Activated CD8-positive, alpha-beta T cell treated with anti-CD3 and anti-CD28 coated beads for 36 hours (primary cell): ENCODE measurements at regions of chr14 and their contacts with region 1.

Region 1: DNA sequence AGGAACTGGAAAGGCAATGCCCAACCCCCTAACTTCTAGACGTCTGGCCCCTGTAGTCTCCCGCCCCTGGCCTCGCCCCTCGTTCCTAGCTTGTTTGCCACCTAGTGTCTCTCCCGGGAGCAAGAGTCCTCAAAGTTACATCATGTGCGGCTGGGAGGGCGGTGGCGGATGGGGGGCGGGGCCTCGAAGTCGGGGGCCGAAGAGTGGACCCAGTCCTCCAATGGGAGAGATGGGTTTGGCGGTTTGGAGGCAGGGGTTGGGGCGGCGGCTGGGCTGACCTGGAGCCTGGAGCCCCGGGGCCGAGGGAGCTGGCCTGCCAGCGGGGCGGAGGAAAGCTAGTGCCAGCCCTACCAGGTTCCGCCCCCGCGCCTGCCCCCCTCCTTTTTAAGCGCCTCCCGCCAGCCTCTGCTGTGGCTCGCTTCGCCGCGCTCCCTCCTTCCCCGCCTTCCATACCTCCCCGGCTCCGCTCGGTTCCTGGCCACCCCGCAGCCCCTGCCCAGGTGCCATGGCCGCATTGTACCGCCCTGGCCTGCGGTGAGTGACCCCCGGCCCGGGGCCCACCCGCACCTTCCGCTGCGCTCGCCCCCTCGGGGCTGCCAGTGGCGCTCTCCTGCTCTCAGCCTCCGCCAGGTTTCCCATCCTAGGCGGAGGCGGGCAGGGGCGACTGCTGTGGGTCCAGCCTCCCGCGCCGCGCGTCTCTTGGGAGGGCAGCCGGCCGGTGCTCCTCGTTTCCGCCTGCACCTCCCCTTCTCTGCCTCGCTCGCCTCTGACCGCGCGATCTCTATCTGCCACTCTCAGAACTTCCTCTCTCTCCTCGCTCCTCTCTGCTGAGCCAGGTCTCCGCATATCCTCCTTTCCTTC is at the start of gene PCK2:
- DNase-seq: peak; percentile 91
- ATAC-seq: peak; percentile 75
- H3K4me3 Mint-ChIP-seq: peak within 1 kb of the TSS; percentile 93
- H3K27ac Mint-ChIP-seq: peak within 1 kb of the TSS; percentile 95
- H3K4me1 Mint-ChIP-seq: peaks cover 24% of the 10 kb centered on the region
- H3K27me3 Mint-ChIP-seq: no peaks in the 10 kb centered on the region
- CTCF ChIP-seq: no peak
- total RNA-seq, gene PCK2: 90.3 to 93.1 TPM

Region 2: GRCh38 chr14:24013654-24014514 is 80.2 kb before region 1 on chr14:
- CTCF ChIA-PET with region 1: interaction called, 8 read pairs
- POLR2A ChIA-PET with region 1: no interaction called
- intact Hi-C with region 1: loop called (anchors 5 kb)
- DNase-seq: peak; percentile 63
- ATAC-seq: peak; percentile 99
- H3K4me3 Mint-ChIP-seq: no peak overlapping the region
- H3K27ac Mint-ChIP-seq: no peak overlapping the region
- H3K4me1 Mint-ChIP-seq: peaks cover 22% of the 10 kb centered on the region
- H3K27me3 Mint-ChIP-seq: no peaks in the 10 kb centered on the region
- CTCF ChIP-seq: peak; percentile 84

Region 3: GRCh38 chr14:24058260-24058950 is 35.7 kb before region 1 on chr14:
- CTCF ChIA-PET with region 1: interaction called, 345 read pairs
- POLR2A ChIA-PET with region 1: interaction called, 25 read pairs
- intact Hi-C with region 1: loop called (anchors 1 kb)
- DNase-seq: peak; percentile 85
- ATAC-seq: peak; percentile 80
- H3K4me3 Mint-ChIP-seq: no peak overlapping the region
- H3K27ac Mint-ChIP-seq: peak overlapping the region; percentile 85
- H3K4me1 Mint-ChIP-seq: peaks cover 6% of the 10 kb centered on the region
- H3K27me3 Mint-ChIP-seq: no peaks in the 10 kb centered on the region
- CTCF ChIP-seq: peak; percentile 95

Region 4: GRCh38 chr14:24075485-24076301 is 18.4 kb before region 1 on chr14:
- CTCF ChIA-PET with region 1: interaction called, 99 read pairs
- POLR2A ChIA-PET with region 1: interaction called, 57 read pairs
- intact Hi-C with region 1: no loop called
- DNase-seq: no peak
- ATAC-seq: no peak
- H3K4me3 Mint-ChIP-seq: no peak overlapping the region
- H3K27ac Mint-ChIP-seq: peak overlapping the region; percentile 55
- H3K4me1 Mint-ChIP-seq: peaks cover 18% of the 10 kb centered on the region
- H3K27me3 Mint-ChIP-seq: no peaks in the 10 kb centered on the region
- CTCF ChIP-seq: no peak

Region 5: GRCh38 chr14:24108336-24108874 is 14.3 kb after region 1 on chr14:
- CTCF ChIA-PET with region 1: interaction called, 218 read pairs
- POLR2A ChIA-PET with region 1: interaction called, 80 read pairs
- intact Hi-C with region 1: no loop called
- DNase-seq: no peak
- ATAC-seq: peak; percentile 31
- H3K4me3 Mint-ChIP-seq: peak overlapping the region; percentile 60
- H3K27ac Mint-ChIP-seq: peak overlapping the region; percentile 99
- H3K4me1 Mint-ChIP-seq: peaks cover 20% of the 10 kb centered on the region
- H3K27me3 Mint-ChIP-seq: no peaks in the 10 kb centered on the region
- CTCF ChIP-seq: no peak

Region 6: DNA sequence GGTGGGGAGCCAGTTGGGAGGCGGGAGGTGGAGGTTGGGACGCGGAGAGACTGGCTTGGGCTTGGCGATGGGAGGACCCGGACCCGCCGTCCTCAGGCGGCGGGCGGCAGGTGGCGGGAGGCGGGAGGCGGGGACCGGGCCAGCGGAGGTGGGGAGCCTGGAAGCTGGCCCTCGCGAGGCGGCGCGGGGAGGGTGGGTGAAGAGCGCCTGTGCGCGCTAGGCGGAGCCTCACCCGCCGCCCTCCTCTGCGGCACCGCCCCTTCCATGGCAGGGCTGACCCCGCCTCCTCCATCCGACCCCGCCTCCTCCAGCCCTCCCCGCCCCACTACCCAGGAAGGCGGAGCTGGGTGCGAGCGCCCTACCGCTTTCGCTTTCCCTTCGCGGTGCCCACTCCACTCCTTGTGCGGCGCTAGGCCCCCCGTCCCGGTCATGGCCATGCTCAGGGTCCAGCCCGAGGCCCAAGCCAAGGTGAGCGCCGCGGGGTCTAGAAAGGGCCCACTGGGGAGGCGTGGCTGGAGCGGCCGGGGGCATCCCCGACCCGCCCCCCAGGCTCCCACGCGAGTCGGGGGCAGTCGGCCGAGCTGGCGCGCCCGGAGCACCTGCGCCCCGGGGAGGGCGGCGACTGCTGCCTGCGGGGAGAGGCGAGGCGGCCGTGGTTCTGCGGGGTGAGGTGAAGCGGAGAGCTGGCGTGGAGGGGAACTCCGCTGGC is 41.9 kb after region 1 on chr14 and contains the start of gene PSME1:
- CTCF ChIA-PET with region 1: interaction called, 3 read pairs
- POLR2A ChIA-PET with region 1: interaction called, 22 read pairs
- intact Hi-C with region 1: no loop called
- DNase-seq: peak; percentile 96
- ATAC-seq: peak; percentile 97
- H3K4me3 Mint-ChIP-seq: peak within 1 kb of the TSS; percentile 97
- H3K27ac Mint-ChIP-seq: peak within 1 kb of the TSS; percentile 92
- H3K4me1 Mint-ChIP-seq: peaks cover 56% of the 10 kb centered on the region
- H3K27me3 Mint-ChIP-seq: no peaks in the 10 kb centered on the region
- CTCF ChIP-seq: no peak
- total RNA-seq, gene PSME1: 451 to 460 TPM

Region 7: DNA sequence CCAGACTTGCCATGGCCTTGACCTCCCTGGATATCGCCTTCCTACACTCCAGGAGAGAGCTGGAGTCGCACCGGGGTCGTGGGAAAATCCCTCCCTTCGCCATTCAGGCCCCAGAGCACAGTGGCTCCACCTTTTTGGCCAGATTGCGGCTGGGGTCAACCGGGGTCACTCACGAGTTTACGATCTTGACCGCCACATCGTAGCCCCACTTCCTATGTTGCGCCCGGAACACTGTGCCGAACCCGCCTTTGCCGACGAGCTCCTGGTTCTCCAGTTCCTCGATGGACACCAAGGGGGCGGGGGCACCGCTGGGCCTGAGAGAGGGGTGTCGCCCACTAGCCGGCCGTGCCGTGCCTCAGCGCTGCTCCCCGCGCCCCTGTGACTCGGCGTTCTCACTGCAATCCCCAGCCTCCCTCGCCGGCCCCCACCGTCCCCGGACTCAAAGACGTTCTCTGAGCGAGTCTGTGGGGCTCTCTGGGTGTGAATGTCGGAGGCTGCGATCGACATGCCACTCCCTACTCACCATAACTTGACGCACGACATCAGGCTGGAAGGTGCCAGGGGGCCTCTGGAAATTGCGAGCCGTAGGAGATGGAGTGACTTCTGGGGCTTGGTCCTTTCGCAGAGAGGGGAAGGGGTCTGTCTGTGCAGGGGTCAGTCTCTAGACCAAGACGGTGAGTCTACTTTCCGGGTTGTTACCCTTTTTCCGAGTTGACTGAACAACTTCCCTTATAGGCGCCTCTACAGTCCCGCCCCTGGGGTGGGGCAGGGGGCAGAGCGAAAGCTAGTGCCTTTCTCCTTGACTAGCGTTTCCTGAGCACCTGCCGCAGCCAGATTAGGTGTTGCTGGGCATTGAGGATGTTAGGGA is 245.4 kb after region 1 on chr14 and contains the start of gene RIPK3:
- CTCF ChIA-PET with region 1: no interaction called
- POLR2A ChIA-PET with region 1: no interaction called
- intact Hi-C with region 1: no loop called
- DNase-seq: peak; percentile 81
- ATAC-seq: peak; percentile 94
- H3K4me3 Mint-ChIP-seq: peak within 1 kb of the TSS; percentile 85
- H3K27ac Mint-ChIP-seq: peak within 1 kb of the TSS; percentile 74
- H3K4me1 Mint-ChIP-seq: peaks cover 18% of the 10 kb centered on the region
- H3K27me3 Mint-ChIP-seq: peaks cover 12% of the 10 kb centered on the region
- CTCF ChIP-seq: no peak
- total RNA-seq, gene RIPK3: 5.9 to 6.5 TPM